SK-N-SH (cell line): ENCODE measurements at regions of chr6 and their contacts with region 1.

Region 1: GRCh38 chr6:30102970-30103874 is 9.7 kb downstream of the TRIM31 start:
- DNase-seq: peak; percentile 84
- H3K4me3 ChIP-seq: peak overlapping the region; percentile 37 to 64
- H3K27ac ChIP-seq: no peak overlapping the region
- H3K4me1 ChIP-seq: peaks cover 5 to 11% of the 10 kb centered on the region in 2 experiments; a peak in 2 of 4 replicates
- H3K27me3 ChIP-seq: peaks cover 64% of the 10 kb centered on the region
- CTCF ChIP-seq: peak; percentile 88
- EP300 ChIP-seq: no peak
- RAD21 ChIP-seq: peak; percentile 80

Region 2: DNA sequence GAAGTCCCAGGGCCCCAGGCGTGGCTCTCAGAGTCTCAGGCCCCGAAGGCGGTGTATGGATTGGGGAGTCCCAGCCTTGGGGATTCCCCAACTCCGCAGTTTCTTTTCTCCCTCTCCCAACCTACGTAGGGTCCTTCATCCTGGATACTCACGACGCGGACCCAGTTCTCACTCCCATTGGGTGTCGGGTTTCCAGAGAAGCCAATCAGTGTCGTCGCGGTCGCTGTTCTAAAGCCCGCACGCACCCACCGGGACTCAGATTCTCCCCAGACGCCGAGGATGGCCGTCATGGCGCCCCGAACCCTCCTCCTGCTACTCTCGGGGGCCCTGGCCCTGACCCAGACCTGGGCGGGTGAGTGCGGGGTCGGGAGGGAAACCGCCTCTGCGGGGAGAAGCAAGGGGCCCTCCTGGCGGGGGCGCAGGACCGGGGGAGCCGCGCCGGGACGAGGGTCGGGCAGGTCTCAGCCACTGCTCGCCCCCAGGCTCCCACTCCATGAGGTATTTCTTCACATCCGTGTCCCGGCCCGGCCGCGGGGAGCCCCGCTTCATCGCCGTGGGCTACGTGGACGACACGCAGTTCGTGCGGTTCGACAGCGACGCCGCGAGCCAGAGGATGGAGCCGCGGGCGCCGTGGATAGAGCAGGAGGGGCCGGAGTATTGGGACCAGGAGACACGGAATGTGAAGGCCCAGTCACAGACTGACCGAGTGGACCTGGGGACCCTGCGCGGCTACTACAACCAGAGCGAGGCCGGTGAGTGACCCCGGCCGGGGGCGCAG is 160.8 kb before region 1 on chr6 and contains the start of gene HLA-A:
- CTCF ChIA-PET with region 1: no interaction called
- POLR2A ChIA-PET with region 1: no interaction called
- DNase-seq: peak; percentile 91
- H3K4me3 ChIP-seq: peak within 1 kb of the TSS; percentile 64 to 70
- H3K27ac ChIP-seq: peak within 1 kb of the TSS in 1 of 2 experiments; percentile 55; a peak in 2 of 4 replicates
- H3K4me1 ChIP-seq: peaks cover 0 to 12% of the 10 kb centered on the region in 2 experiments; a peak in 1 of 4 replicates
- H3K27me3 ChIP-seq: no peaks in the 10 kb centered on the region
- CTCF ChIP-seq: 0 out of 2 replicates have a peak, but pooled peaks have one; percentile 9
- EP300 ChIP-seq: no peak
- RAD21 ChIP-seq: no peak
- polyA plus RNA-seq, gene HLA-A: 250 and 312 TPM in 2 replicates

Region 3: DNA sequence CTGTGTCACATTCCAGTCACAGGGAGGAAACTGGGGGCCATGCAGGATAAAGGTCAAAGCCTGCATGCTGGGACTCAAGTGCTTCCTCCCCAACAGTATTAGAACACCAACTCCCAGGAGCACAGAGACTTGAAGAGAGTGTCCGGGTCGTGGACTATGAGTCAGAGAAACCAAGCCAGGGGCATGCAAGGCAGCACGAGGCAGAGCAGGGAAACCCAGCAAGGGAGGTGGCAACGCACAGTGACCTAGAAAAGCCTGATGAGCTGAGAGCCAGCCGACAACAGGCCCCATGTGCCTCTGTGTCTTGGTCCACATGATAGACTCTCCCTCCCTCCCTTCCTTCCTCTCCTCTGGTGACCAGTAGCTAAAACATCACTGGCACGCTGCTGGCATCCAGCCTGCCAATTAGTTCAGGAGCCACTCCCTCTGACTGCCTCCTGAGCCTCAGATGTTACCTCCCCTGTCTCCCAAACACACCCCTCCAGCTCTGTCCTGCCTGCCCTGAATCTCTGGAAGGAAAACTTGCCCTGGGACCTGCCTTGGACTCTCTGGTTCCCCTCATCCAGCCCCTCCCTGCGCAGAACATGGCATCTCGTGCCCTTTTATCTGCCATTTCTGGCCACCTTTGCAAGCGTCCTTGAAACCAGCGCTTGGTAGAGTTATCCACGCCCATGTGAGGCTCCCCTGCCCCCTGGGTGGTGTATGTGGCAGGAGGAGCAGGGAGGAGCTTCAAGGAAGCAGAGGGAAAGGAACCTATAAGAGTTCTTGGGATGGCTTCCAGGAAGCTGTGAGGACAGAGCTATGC is 11.4 kb before region 1 on chr6:
- CTCF ChIA-PET with region 1: interaction called, 27 read pairs
- POLR2A ChIA-PET with region 1: no interaction called
- DNase-seq: no peak
- H3K4me3 ChIP-seq: no peak overlapping the region
- H3K27ac ChIP-seq: no peak overlapping the region
- H3K4me1 ChIP-seq: no peaks in the 10 kb centered on the region
- H3K27me3 ChIP-seq: peaks cover 56% of the 10 kb centered on the region
- CTCF ChIP-seq: no peak
- EP300 ChIP-seq: no peak
- RAD21 ChIP-seq: no peak

Region 4: DNA sequence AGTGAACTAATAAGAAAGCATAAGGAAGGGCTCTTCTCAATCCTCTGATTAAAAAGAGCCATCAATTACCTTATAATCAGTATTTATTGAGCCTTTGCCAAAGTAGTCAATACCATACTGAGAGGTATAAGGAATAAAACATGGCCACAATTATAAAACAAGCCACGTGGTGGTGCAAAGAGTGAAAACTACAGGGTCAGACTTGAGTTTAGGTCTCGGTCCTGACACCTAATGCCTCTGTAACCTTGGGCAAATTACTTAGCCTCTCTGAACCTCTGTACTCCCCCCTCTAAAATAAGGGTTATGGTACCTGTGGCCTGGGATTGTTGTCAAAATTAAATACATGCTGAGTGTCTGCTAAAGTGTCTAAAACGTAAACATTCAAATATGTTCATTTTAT is 46.0 kb after region 1 on chr6:
- CTCF ChIA-PET with region 1: interaction called, 21 read pairs
- POLR2A ChIA-PET with region 1: no interaction called
- DNase-seq: no peak
- H3K4me3 ChIP-seq: no peak overlapping the region
- H3K27ac ChIP-seq: no peak overlapping the region
- H3K4me1 ChIP-seq: peaks cover 0 to 2% of the 10 kb centered on the region in 2 experiments; a peak in 1 of 4 replicates
- H3K27me3 ChIP-seq: peaks cover 22% of the 10 kb centered on the region
- CTCF ChIP-seq: peak; percentile 24; the same call in 1 of the 2 replicates
- EP300 ChIP-seq: no peak
- RAD21 ChIP-seq: no peak

Region 5: DNA sequence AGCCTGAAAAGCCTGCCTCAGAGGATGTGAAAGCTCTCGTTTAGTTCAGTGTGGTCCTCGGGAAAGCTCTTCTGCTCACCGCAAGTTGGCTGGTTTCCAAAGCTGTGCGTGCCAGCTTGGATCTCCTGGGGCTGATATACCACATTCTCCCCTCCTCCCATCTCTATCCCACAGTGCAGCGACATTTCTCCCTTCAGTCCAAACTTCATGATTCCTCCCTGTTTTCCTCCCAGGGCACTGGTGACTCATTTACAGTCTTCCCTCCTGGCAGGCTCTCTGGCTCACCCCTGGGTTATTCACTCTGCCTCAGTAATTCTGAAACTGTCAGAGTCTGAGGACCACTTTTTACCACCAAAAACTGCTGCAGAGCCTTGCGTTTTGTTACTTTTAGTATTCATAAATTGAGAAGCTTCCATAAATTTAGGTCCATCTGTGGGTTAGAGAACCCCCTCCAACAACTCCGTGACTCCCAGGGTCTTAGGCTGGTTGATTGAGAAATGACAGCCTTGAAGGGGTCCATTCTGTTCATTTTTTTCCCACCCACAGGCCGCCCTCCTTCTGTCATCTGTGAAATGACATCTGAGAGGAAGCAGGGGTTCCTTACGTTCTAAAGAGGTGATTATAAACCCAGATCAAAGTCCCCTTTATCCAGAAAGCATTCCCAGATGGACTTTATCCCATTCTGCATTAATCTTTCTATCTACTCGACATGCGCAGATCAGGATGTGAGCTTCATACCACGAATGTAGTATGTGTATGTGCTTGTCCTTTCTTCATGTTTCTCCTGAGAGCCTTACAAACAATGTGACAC is 51.7 kb after region 1 on chr6:
- CTCF ChIA-PET with region 1: interaction called, 12 read pairs
- POLR2A ChIA-PET with region 1: no interaction called
- DNase-seq: no peak
- H3K4me3 ChIP-seq: no peak overlapping the region
- H3K27ac ChIP-seq: no peak overlapping the region
- H3K4me1 ChIP-seq: no peaks in the 10 kb centered on the region; a peak in 1 of 4 replicates
- H3K27me3 ChIP-seq: peaks cover 28% of the 10 kb centered on the region; the same call in 1 of the 2 replicates
- CTCF ChIP-seq: no peak
- EP300 ChIP-seq: no peak
- RAD21 ChIP-seq: no peak

Region 6: GRCh38 chr6:30169658-30170614 is 66.7 kb after region 1 on chr6:
- CTCF ChIA-PET with region 1: interaction called, 10 read pairs
- POLR2A ChIA-PET with region 1: no interaction called
- DNase-seq: peak; percentile 73
- H3K4me3 ChIP-seq: no peak overlapping the region; a peak in 1 of 4 replicates
- H3K27ac ChIP-seq: no peak overlapping the region
- H3K4me1 ChIP-seq: peaks cover 0 to 3% of the 10 kb centered on the region in 2 experiments; a peak in 1 of 4 replicates
- H3K27me3 ChIP-seq: peaks cover 67% of the 10 kb centered on the region
- CTCF ChIP-seq: peak; percentile 82
- EP300 ChIP-seq: no peak
- RAD21 ChIP-seq: peak; percentile 82